Breast epithelium (tissue), 4 donors: ENCODE measurements at regions of chr4 and their contacts with region 1.

Region 1: DNA sequence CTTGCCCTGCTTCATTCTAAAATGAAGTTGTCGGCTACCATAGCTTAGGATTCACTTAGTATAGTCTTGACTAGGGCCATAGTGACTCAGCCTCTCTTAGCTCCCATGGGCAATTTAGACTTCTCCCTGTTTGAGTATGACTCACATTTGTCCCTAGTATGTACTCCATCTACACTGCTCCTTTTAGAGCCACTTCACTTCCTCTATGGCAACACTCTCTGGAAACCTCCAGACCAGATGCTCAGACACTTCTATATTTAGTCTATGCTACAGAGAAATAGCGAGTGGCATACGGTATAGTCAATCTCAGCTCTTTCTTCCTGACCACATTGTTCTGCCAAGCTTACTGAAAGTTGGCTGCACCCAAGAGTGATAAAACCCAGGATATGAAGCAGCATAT is 11.2 kb downstream of the MEPE start:
- DNase-seq: no peak
- H3K4me3 ChIP-seq: no peak overlapping the region
- H3K27ac ChIP-seq: no peak overlapping the region
- H3K4me1 ChIP-seq: no peaks in the 10 kb centered on the region
- H3K27me3 ChIP-seq: no peaks in the 10 kb centered on the region
- CTCF ChIP-seq: no peak
- POLR2A ChIP-seq: no peak

Region 2: GRCh38 chr4:87802858-87803257 is 41.1 kb before region 1 on chr4:
- intact Hi-C with region 1: loop called (anchors 2 kb)
- DNase-seq: no peak
- H3K4me3 ChIP-seq: no peak overlapping the region
- H3K27ac ChIP-seq: no peak overlapping the region
- H3K4me1 ChIP-seq: peaks cover 0 to 5% of the 10 kb centered on the region in 2 donors
- H3K27me3 ChIP-seq: no peaks in the 10 kb centered on the region
- CTCF ChIP-seq: no peak
- POLR2A ChIP-seq: no peak